Pancreas (tissue), 10 donors: ENCODE measurements at regions of chr5 and their contacts with region 1.

Region 1: DNA sequence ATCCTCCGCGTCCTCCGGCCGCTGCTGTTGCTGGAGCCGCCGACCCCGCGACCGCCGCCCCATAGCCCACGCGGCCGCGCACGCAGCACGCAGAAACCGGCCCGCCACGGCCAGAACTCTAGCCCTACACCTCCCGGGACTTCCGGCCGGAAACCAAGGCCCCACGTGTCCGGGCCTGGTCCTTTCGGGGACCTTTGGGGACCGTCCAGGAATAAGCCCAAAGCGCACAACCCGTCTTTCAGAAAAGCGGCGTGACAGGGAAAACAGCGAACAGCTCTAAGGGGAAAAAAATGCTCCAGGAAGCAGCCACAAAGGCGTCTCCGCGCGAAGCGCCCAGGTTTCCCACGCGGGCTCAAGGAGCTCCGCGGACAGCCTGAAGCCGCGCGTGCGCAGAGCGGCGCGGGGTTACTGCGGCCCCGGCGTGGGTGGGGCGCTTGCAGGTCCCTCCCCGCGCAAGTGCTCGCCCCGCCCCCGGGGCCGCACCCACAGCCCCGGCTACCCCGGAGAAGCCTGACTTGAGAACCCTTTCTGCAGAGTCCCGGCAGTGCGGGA is at the starts of genes NSUN2 and SRD5A1:
- DNase-seq: peak; percentile 83 to 97 (median 91)
- ATAC-seq: peak; percentile 96 to 99 (median 98)
- H3K4me3 ChIP-seq: peak within 1 kb of the TSS; percentile 73 to 100 (median 93)
- H3K27ac ChIP-seq: peak within 1 kb of the TSS; percentile 96 to 99 (median 98)
- H3K4me1 ChIP-seq: peaks cover 0 to 12% (median 0%) of the 10 kb centered on the region in 3 donors
- H3K27me3 ChIP-seq: no peaks in the 10 kb centered on the region
- CTCF ChIP-seq: no peak
- total RNA-seq, gene NSUN2: 15.6 to 25.2 (median 19.4) TPM
- total RNA-seq, gene SRD5A1: 3.0 to 8.2 (median 6.8) TPM

Region 2: DNA sequence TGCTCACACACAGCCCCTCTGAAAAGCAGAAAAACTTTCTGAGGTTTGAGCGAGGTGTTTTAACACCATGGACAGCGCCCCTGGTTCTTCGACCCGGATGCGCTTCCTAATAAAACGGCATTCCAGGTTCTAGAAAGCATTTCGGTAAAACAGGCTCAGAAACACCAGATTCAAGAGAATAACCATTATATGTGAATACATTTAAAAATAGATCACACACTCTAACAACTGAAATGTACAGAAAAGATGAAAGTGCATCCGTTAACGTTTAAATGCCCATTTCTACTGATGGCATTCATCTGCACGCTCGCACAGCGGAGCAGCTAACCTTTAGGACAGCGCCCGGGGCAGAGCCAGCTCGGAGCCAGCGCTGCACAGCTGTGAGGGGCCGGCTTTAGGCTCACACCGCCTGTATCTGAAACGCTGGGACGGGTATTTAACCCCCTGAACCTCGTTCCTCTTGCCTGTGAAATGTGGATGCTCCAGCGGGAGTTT is 54.0 kb after region 1 on chr5:
- intact Hi-C with region 1: loop called in 1 of 3 experiments (anchors 10 kb)
- DNase-seq: no peak
- ATAC-seq: peak in 3 of 4 donors; percentile 79 to 93 (median 87)
- H3K4me3 ChIP-seq: peak overlapping the region in 1 of 4 donors; percentile 34
- H3K27ac ChIP-seq: no peak overlapping the region
- H3K4me1 ChIP-seq: no peaks in the 10 kb centered on the region
- H3K27me3 ChIP-seq: peaks cover 0 to 4% (median 0%) of the 10 kb centered on the region in 4 donors
- CTCF ChIP-seq: no peak

Region 3: DNA sequence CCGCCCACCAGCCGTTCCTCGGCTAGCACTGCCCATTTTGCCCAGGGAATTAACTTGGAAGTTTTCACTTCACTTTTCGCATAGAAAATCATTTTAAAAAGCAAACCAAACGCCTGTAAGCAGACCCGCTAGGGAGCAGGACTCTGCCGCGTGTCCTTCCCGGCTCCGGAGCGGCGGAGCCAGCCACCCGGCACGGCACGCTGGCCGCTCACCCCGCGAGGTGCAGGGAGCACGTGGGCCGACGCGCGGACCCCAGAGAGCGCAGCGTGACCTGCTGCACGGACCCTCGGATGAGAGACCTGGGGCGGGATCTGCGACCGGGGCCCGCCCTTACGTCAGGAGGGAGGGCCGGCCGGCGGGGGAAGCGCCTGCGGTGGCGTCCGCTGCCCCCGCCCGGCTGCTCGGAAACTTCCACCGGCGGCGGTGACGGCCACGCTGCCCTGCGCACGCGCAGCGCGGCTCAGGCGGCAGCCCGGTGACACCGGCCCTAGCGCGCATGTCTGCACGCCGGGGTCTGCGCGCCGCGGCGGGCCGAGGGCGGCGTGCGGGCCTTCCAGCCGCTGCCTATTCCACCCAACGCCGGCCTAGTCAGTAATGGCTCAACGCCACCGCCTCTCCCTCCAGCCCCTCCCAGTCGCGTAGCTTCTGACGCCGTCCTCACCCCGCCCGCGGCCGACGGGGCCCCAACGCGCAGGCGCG is 79.7 kb after region 1 on chr5:
- intact Hi-C with region 1: loop called in 1 of 3 experiments (anchors 10 kb)
- DNase-seq: peak in 5 of 6 donors; percentile 95 to 99 (median 98)
- ATAC-seq: peak; percentile 79 to 92 (median 89)
- H3K4me3 ChIP-seq: peak overlapping the region; percentile 50 to 83 (median 69)
- H3K27ac ChIP-seq: peak overlapping the region; percentile 93 to 98 (median 95)
- H3K4me1 ChIP-seq: peaks cover 14 to 23% (median 14%) of the 10 kb centered on the region in 3 donors
- H3K27me3 ChIP-seq: no peaks in the 10 kb centered on the region
- CTCF ChIP-seq: no peak

Region 4: DNA sequence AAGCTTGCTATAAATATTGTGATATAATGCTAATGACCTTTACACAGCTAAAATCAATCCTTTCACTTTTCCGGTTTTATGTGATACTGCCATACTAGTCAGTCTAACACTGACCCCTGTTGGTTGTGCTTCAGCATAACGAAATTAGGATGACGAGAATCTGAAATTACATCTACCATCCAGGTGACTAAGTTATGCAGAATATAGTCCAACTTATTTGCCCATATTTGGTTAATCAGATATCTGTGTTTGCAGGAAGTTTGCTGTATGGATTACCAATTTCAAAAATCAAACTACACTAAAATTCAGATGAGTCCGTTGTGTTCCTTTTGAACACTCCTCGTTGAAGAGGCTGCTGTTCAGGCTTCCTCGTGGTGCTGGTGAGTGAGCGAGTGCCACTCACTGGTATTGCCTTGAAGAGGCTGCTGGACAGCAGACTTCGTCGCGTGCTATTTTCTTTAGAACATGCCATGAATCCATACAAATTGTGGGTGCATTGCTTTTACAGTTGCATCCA is 112.8 kb after region 1 on chr5:
- intact Hi-C with region 1: loop called in 1 of 3 experiments (anchors 10 kb)
- DNase-seq: no peak
- ATAC-seq: peak; percentile 66 to 90 (median 89)
- H3K4me3 ChIP-seq: no peak overlapping the region
- H3K27ac ChIP-seq: no peak overlapping the region
- H3K4me1 ChIP-seq: no peaks in the 10 kb centered on the region
- H3K27me3 ChIP-seq: no peaks in the 10 kb centered on the region
- CTCF ChIP-seq: peak; percentile 37 to 64 (median 59)

Region 5: GRCh38 chr5:6780802-6781391 is 147.9 kb after region 1 on chr5:
- intact Hi-C with region 1: no loop called
- DNase-seq: no peak
- ATAC-seq: no peak
- H3K4me3 ChIP-seq: no peak overlapping the region
- H3K27ac ChIP-seq: no peak overlapping the region
- H3K4me1 ChIP-seq: no peaks in the 10 kb centered on the region
- H3K27me3 ChIP-seq: no peaks in the 10 kb centered on the region
- CTCF ChIP-seq: peak in 1 of 4 donors; percentile 20

Region 6: DNA sequence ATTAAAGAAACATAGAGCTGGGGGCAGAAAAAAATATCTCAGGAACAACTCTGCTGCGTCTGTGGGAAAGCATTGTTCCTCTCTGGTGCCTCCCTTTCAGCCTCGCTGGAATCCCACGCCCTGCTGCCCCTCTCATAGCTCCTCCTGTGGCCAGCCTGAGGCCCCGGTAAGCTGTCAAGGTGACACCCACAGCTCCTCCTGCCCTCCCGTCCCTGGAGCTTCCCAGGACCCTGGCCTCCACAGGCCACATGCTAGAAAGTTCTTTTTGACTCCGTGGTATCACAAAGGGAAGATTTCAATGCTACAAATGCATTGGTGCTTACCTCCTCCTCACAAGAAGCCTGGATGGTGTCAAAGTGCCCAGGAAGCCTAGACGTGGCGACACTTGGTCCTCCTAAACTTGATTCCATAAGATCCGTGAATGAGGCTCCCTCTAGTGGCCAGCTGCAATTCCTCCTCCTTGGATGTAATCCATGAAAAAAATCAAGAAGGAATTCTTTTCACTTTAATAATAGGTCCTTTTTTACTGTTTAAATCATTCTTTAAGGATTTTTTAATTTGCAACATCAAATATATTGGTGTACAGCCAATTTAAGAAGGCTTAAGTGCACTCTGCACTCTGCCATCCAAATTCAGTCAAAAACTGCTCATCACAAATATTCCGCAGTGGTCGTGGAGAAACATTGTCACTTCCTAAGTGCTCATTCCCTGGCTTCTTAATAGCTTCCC is 1113.1 kb after region 1 on chr5:
- intact Hi-C with region 1: loop called in 1 of 3 experiments (anchors 5 kb)
- DNase-seq: peak in 5 of 6 donors; percentile 44 to 84 (median 66)
- ATAC-seq: peak; percentile 31 to 83 (median 81)
- H3K4me3 ChIP-seq: no peak overlapping the region
- H3K27ac ChIP-seq: no peak overlapping the region
- H3K4me1 ChIP-seq: no peaks in the 10 kb centered on the region
- H3K27me3 ChIP-seq: peaks cover 0 to 6% (median 0%) of the 10 kb centered on the region in 4 donors
- CTCF ChIP-seq: peak; percentile 69 to 93 (median 87)